ENCODE measurements at regions of chr4 and their contacts with region 1.

Region 1: GRCh38 chr4:102430461-102430910 is 70.7 kb upstream of the NFKB1 start:
- DNase-seq: peak in 1 of 2 experiments; percentile 27
- ATAC-seq: no peak; a peak in 1 of 6 replicates
- H3K4me3 ChIP-seq: peak overlapping the region; percentile 75
- H3K27ac ChIP-seq: peak overlapping the region; percentile 93 to 97
- H3K4me1 ChIP-seq: peaks cover 8% of the 10 kb centered on the region
- CTCF ChIP-seq: no peak
- EP300 ChIP-seq: no peak
- POLR2A ChIP-seq: no peak
- RAD21 ChIP-seq: no peak

Region 2: DNA sequence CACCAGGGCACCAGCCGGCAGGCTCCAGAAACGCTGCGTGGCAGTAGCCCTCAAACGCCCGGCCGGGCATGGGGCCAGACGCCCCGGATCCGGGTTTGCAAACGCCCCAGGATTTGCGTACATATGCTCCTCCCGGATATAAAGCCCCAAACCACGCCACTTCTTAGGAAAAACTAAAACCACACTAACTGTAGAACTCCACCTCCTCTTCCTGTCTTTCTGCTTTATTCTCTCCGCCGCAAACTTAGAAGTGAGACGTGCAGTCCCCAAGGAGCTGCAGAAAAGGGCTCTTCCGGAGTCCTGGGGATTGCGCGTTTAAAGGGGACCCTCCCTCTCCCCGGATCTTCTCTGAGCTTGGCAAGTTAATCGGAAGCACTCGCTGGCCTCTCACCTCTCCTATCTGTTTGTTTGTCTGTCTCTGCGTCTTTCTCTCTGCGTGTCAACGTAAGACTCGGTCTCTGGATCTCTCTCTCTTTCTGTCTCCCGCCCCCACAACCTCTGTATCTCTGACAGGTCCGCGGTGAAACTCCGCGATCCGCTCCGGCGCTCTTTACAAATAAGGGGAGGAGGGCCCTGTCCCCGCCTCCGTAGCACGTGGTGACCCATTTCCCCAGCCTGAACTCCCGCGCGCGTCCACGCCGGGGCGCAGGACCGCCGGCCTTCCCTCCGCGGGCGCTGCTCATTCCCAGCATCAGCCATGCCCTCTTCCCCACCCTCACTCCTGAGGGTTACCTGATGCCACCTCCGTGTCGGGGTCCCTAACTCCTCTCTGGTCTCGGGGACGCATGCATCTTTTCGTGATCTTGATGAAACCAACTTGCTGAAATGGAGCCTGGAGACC is 85.3 kb before region 1 on chr4 and contains the start of gene SLC39A8:
- CTCF ChIA-PET with region 1: interaction called, 13 read pairs
- POLR2A ChIA-PET with region 1: interaction called, 9 read pairs
- DNase-seq: peak; percentile 75 to 89
- ATAC-seq: peak; percentile 93 to 94
- H3K4me3 ChIP-seq: peak within 1 kb of the TSS; percentile 56
- H3K27ac ChIP-seq: peak within 1 kb of the TSS; percentile 74 to 93
- H3K4me1 ChIP-seq: peaks cover 9% of the 10 kb centered on the region; the same call in 1 of the 3 replicates
- CTCF ChIP-seq: peak; percentile 44
- EP300 ChIP-seq: no peak
- POLR2A ChIP-seq: no peak
- RAD21 ChIP-seq: peak; percentile 50 to 64; a peak in 4 of 5 replicates
- polyA plus RNA-seq, gene SLC39A8: 19.0 and 20.4 TPM in 2 replicates

Region 3: DNA sequence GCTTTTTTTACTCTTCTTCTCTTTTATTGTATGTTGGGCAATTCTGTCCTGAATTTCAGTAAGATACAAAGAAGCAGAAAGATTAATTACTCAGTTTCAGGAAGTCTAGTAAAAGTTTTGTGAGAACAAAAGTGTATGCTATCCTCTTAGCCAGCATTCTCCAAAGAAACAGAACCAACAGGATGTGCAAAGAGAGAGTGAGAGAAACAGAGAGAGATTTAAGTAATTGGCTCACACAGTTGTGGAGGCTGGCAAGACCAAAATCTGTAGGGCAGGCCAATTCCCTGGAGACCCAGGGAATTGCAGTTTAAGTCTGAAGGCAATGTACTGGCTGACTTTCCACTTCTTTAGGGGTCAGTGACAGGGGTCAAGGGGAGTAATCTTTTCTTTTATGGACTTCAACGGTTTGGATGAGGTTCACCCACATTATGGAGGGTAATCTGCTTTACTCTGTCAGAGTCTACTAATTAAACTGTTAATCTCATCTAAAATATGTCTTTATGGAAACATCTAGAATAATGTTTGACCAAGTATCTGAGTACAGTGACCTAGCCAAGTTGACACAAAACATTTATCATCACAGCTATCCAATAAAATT is 26.0 kb before region 1 on chr4:
- CTCF ChIA-PET with region 1: no interaction called
- POLR2A ChIA-PET with region 1: no interaction called
- DNase-seq: no peak
- ATAC-seq: no peak
- H3K4me3 ChIP-seq: no peak overlapping the region
- H3K27ac ChIP-seq: no peak overlapping the region
- H3K4me1 ChIP-seq: no peaks in the 10 kb centered on the region
- CTCF ChIP-seq: no peak
- EP300 ChIP-seq: no peak
- POLR2A ChIP-seq: no peak
- RAD21 ChIP-seq: no peak

Region 4: DNA sequence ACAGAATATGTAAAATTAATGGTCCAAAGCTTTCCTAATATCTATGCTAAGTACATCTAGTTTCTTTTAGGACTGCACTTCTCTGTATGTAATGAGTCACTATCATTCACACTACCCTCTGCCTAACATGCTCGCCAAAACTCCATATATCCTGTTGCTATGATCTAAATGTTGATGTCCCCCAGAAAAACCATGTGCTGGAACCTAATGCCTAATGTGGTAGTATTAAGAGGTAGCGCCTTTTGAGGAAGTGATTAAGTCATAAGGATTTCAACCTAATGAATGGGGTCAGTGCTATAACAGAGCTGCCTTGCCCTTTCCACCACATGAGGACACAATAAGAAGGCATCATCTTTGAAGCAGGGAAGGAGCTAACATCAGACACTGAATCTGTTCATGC is 35.8 kb after region 1 on chr4:
- CTCF ChIA-PET with region 1: no interaction called
- POLR2A ChIA-PET with region 1: no interaction called
- DNase-seq: no peak
- ATAC-seq: no peak
- H3K4me3 ChIP-seq: no peak overlapping the region
- H3K27ac ChIP-seq: no peak overlapping the region
- H3K4me1 ChIP-seq: no peaks in the 10 kb centered on the region
- CTCF ChIP-seq: no peak
- EP300 ChIP-seq: no peak
- POLR2A ChIP-seq: no peak
- RAD21 ChIP-seq: no peak